K562 (cell line): ENCODE measurements at regions of chr12 and their contacts with region 1.

Region 1: GRCh38 chr12:124884587-124885438 is 21.1 kb upstream of the SCARB1 start:
- DNase-seq: peak; percentile 77 to 98 (median 82)
- ATAC-seq: peak; percentile 87
- H3K4me3 ChIP-seq: no peak overlapping the region
- H3K27ac ChIP-seq: peak overlapping the region; percentile 57; the same call in 2 of the 3 replicates
- H3K4me1 ChIP-seq: peaks cover 36 to 55% of the 10 kb centered on the region in 2 experiments
- H3K27me3 ChIP-seq: no peaks in the 10 kb centered on the region
- CTCF ChIP-seq: peak in 2 of 3 experiments; percentile 25 to 28; a peak in 2 of 6 replicates
- EP300 ChIP-seq: peak; percentile 85
- POLR2A ChIP-seq: no peak
- RAD21 ChIP-seq: no peak

Region 2: GRCh38 chr12:124863416-124864325 is 21.1 kb before region 1 on chr12 and contains the start of gene SCARB1:
- CTCF ChIA-PET with region 1: no interaction called
- POLR2A ChIA-PET with region 1: interaction called, 21 read pairs
- in situ Hi-C with region 1: no loop called
- intact Hi-C with region 1: loop called (anchors 2 kb)
- DNase-seq: peak; percentile 86 to 99 (median 98)
- ATAC-seq: peak; percentile 84
- H3K4me3 ChIP-seq: peak within 1 kb of the TSS; percentile 80
- H3K27ac ChIP-seq: peak within 1 kb of the TSS; percentile 94
- H3K4me1 ChIP-seq: peaks cover 48 to 50% of the 10 kb centered on the region in 2 experiments
- H3K27me3 ChIP-seq: no peaks in the 10 kb centered on the region
- CTCF ChIP-seq: no peak; a peak in 1 of 6 replicates
- EP300 ChIP-seq: no peak
- POLR2A ChIP-seq: peak; percentile 85
- RAD21 ChIP-seq: peak in 1 of 2 experiments; percentile 23; a peak in 2 of 4 replicates
- polyA plus RNA-seq, gene SCARB1: 0.56 to 4.7 TPM

Region 3: DNA sequence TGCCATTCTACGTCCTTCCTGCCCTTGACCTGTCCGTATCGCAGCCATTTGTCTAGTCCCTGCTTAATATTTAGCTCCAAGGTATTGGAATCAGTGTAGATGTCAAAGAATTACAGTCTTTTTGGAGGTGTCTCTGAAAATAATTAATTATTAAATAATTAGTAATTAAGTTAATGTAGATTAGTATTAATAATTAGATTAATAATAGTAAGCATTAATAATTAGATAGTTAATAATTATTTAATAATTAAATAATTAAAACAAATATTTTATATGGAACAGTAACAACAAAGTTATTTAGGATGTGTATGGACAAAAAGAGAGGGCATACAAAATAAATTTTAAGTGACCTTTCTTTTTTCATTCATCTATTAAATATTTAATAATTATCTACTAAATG is 820.0 kb after region 1 on chr12:
- CTCF ChIA-PET with region 1: no interaction called
- POLR2A ChIA-PET with region 1: no interaction called
- in situ Hi-C with region 1: no loop called
- intact Hi-C with region 1: no loop called
- DNase-seq: no peak
- ATAC-seq: no peak
- H3K4me3 ChIP-seq: no peak overlapping the region
- H3K27ac ChIP-seq: no peak overlapping the region
- H3K4me1 ChIP-seq: no peaks in the 10 kb centered on the region
- H3K27me3 ChIP-seq: no peaks in the 10 kb centered on the region
- CTCF ChIP-seq: no peak
- EP300 ChIP-seq: no peak
- POLR2A ChIP-seq: no peak
- RAD21 ChIP-seq: no peak